ENCODE measurements at regions of chr2 and their contacts with region 1.

Region 1: GRCh38 chr2:11129598-11130449 is 25.4 kb upstream of the SLC66A3 start:
- DNase-seq: peak; percentile 81 to 85 (median 85)
- H3K4me3 ChIP-seq: peak overlapping the region; percentile 19 to 57
- H3K4me3 Mint-ChIP-seq: peak overlapping the region; percentile 77 to 93 (median 82)
- H3K27ac ChIP-seq: peak overlapping the region; percentile 54
- H3K27ac Mint-ChIP-seq: peak overlapping the region; percentile 77 to 92 (median 84)
- H3K4me1 ChIP-seq: peaks cover 48% of the 10 kb centered on the region
- H3K4me1 Mint-ChIP-seq: peaks cover 14 to 53% (median 37%) of the 10 kb centered on the region in 4 donors
- H3K27me3 ChIP-seq: no peaks in the 10 kb centered on the region
- H3K27me3 Mint-ChIP-seq: no peaks in the 10 kb centered on the region

Region 2: DNA sequence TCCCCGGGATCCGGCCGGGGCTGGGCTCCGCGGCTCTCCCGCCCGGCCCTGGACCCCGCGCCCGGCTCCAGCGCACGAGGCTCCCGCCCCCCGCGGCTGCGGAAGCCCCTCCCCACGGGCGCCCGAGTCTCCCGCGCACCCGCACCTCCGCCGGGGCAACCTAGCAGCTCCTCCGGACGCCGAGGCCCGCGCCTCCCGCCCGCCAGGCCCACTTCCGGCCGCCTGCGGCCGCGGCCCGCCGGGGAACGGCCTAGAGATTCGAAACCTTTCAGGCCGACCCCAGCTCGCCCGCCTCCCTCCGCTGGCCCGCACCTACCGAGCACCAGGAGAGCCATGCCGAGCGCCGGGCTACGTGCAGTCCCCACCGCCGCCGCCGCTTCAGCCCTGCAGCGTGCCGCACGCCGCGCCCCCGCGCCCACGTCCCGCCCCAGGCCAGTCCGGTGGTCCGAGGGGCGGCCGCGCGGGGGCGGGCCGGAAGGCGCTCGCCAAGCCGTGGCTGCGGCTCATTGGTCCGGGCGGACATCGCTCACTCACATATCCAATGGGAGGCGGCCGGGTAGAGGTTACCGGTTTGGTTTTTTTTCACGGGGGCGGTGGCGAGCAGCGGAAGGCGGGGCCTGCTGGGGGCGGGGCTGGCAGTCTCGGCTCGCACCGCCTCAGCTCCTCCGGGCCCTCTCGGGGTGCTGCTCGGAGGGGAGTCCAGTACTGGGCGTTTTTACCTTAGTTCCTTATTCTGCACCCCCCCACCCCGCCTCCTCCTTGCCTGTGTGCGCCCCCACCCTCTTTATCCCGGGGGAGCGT is 317.3 kb before region 1 on chr2 and contains the start of gene PDIA6:
- CTCF ChIA-PET with region 1: interaction called, 13 read pairs
- POLR2A ChIA-PET with region 1: interaction called, 17 read pairs
- intact Hi-C with region 1: no loop called
- DNase-seq: peak; percentile 90 to 95 (median 92)
- H3K4me3 ChIP-seq: peak within 1 kb of the TSS; percentile 72 to 92
- H3K4me3 Mint-ChIP-seq: peak within 1 kb of the TSS; percentile 84 to 95 (median 94)
- H3K27ac ChIP-seq: peak within 1 kb of the TSS; percentile 76
- H3K27ac Mint-ChIP-seq: peak within 1 kb of the TSS; percentile 76 to 95 (median 94)
- H3K4me1 ChIP-seq: peaks cover 47% of the 10 kb centered on the region
- H3K4me1 Mint-ChIP-seq: peaks cover 30 to 43% (median 34%) of the 10 kb centered on the region in 4 donors
- H3K27me3 ChIP-seq: peaks cover under 1% of the 10 kb centered on the region
- H3K27me3 Mint-ChIP-seq: no peaks in the 10 kb centered on the region
- total RNA-seq, gene PDIA6: 75.9 to 84.7 TPM

Region 3: GRCh38 chr2:11145350-11145749 is 15.5 kb after region 1 on chr2:
- CTCF ChIA-PET with region 1: interaction called, 20 read pairs
- POLR2A ChIA-PET with region 1: no interaction called
- intact Hi-C with region 1: no loop called
- DNase-seq: no peak
- H3K4me3 ChIP-seq: no peak overlapping the region
- H3K4me3 Mint-ChIP-seq: no peak overlapping the region
- H3K27ac ChIP-seq: no peak overlapping the region
- H3K27ac Mint-ChIP-seq: no peak overlapping the region
- H3K4me1 ChIP-seq: no peaks in the 10 kb centered on the region
- H3K4me1 Mint-ChIP-seq: no peaks in the 10 kb centered on the region
- H3K27me3 ChIP-seq: no peaks in the 10 kb centered on the region
- H3K27me3 Mint-ChIP-seq: peaks cover 8 to 11% of the 10 kb centered on the region in 2 donors

Region 4: GRCh38 chr2:11196246-11196645 is 66.4 kb after region 1 on chr2:
- CTCF ChIA-PET with region 1: interaction called, 7 read pairs
- POLR2A ChIA-PET with region 1: no interaction called
- intact Hi-C with region 1: loop called (anchors 10 kb)
- DNase-seq: no peak
- H3K4me3 ChIP-seq: no peak overlapping the region
- H3K4me3 Mint-ChIP-seq: no peak overlapping the region
- H3K27ac ChIP-seq: no peak overlapping the region
- H3K27ac Mint-ChIP-seq: no peak overlapping the region
- H3K4me1 ChIP-seq: no peaks in the 10 kb centered on the region
- H3K4me1 Mint-ChIP-seq: no peaks in the 10 kb centered on the region
- H3K27me3 ChIP-seq: no peaks in the 10 kb centered on the region
- H3K27me3 Mint-ChIP-seq: no peaks in the 10 kb centered on the region

Region 5: GRCh38 chr2:11234309-11234708 is 104.5 kb after region 1 on chr2:
- CTCF ChIA-PET with region 1: interaction called, 5 read pairs
- POLR2A ChIA-PET with region 1: no interaction called
- intact Hi-C with region 1: loop called (anchors 1 kb)
- DNase-seq: peak in 3 of 5 donors; percentile 0 to 2 (median 2)
- H3K4me3 ChIP-seq: no peak overlapping the region
- H3K4me3 Mint-ChIP-seq: no peak overlapping the region
- H3K27ac ChIP-seq: no peak overlapping the region
- H3K27ac Mint-ChIP-seq: no peak overlapping the region
- H3K4me1 ChIP-seq: no peaks in the 10 kb centered on the region
- H3K4me1 Mint-ChIP-seq: peaks cover 0 to 6% (median 5%) of the 10 kb centered on the region in 4 donors
- H3K27me3 ChIP-seq: no peaks in the 10 kb centered on the region
- H3K27me3 Mint-ChIP-seq: no peaks in the 10 kb centered on the region

Region 6: GRCh38 chr2:11446733-11447248 is 317.0 kb after region 1 on chr2:
- CTCF ChIA-PET with region 1: interaction called, 95 read pairs
- POLR2A ChIA-PET with region 1: interaction called, 4 read pairs
- intact Hi-C with region 1: no loop called
- DNase-seq: peak; percentile 50 to 59 (median 56)
- H3K4me3 ChIP-seq: no peak overlapping the region
- H3K4me3 Mint-ChIP-seq: no peak overlapping the region
- H3K27ac ChIP-seq: no peak overlapping the region
- H3K27ac Mint-ChIP-seq: no peak overlapping the region
- H3K4me1 ChIP-seq: no peaks in the 10 kb centered on the region
- H3K4me1 Mint-ChIP-seq: no peaks in the 10 kb centered on the region
- H3K27me3 ChIP-seq: no peaks in the 10 kb centered on the region
- H3K27me3 Mint-ChIP-seq: no peaks in the 10 kb centered on the region

Region 7: GRCh38 chr2:11583840-11584524 is 454.2 kb after region 1 on chr2:
- CTCF ChIA-PET with region 1: interaction called, 74 read pairs
- POLR2A ChIA-PET with region 1: interaction called, 4 read pairs
- intact Hi-C with region 1: no loop called
- DNase-seq: peak; percentile 23 to 66 (median 34)
- H3K4me3 ChIP-seq: no peak overlapping the region
- H3K4me3 Mint-ChIP-seq: peak overlapping the region in 1 of 8 donors; percentile 28
- H3K27ac ChIP-seq: no peak overlapping the region
- H3K27ac Mint-ChIP-seq: no peak overlapping the region
- H3K4me1 ChIP-seq: no peaks in the 10 kb centered on the region
- H3K4me1 Mint-ChIP-seq: peaks cover 0 to 3% (median 0%) of the 10 kb centered on the region in 4 donors
- H3K27me3 ChIP-seq: no peaks in the 10 kb centered on the region
- H3K27me3 Mint-ChIP-seq: peaks cover 8 to 14% of the 10 kb centered on the region in 2 donors